Activated B cell treated with CpG ODN at 0.5 μM for 24 hours (primary cell): ENCODE measurements at regions of chr5 and their contacts with region 1.

Region 1: GRCh38 chr5:10563945-10564837 is at the start of gene ANKRD33B:
- DNase-seq: peak; percentile 84
- ATAC-seq: peak; percentile 72
- H3K4me3 Mint-ChIP-seq: peak within 1 kb of the TSS; percentile 97
- H3K27ac Mint-ChIP-seq: peak within 1 kb of the TSS; percentile 93
- H3K4me1 Mint-ChIP-seq: peaks cover 65% of the 10 kb centered on the region
- H3K27me3 Mint-ChIP-seq: no peaks in the 10 kb centered on the region
- CTCF ChIP-seq: no peak
- total RNA-seq, gene ANKRD33B: 156 and 170 TPM in 2 replicates

Region 2: DNA sequence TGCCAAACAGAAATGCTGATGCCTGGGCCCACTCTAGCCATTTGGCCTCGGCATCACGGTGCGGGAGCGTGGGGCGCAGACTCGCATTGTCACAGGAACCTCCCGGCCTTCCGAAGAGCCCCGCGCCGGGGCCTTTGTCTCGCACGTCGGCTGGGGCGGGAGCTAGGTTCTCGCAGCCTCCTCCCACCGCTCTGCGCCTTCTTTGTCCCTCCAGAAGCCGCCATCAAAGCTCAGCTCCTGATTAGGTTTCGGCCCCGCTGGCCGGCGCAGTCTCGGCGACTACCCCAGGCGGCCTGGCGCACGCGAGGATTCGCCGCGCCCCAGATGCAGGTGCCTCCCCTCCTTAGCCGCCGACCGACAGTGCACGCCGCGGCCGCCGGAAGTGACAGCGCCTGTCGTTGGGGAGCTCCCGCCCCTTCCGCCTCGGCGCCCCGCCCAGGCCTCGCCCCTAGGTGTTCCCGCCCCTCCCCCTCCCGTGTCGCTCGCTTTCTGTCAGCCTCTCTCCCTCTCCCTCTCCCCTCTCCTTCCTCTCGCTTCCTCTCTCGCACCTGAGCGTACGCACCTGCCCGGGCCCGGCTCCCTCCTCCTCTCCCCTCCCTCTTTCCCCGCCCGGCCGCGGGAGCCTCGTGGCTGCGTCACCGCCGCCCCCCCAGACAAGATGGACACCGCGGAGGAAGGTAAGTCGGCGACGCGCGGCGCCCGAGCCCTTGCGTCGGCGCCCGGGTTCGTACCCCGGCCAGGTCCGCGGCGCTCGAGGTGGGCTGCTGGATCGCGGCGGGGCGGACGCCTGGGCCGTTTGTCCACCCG is 210.7 kb before region 1 on chr5 and contains the start of gene MARCHF6:
- CTCF ChIA-PET with region 1: no interaction called
- POLR2A ChIA-PET with region 1: interaction called, 3 read pairs
- intact Hi-C with region 1: loop called (anchors 1 kb)
- DNase-seq: peak; percentile 94
- ATAC-seq: peak; percentile 77
- H3K4me3 Mint-ChIP-seq: peak within 1 kb of the TSS; percentile 98
- H3K27ac Mint-ChIP-seq: peak within 1 kb of the TSS; percentile 98
- H3K4me1 Mint-ChIP-seq: peaks cover 49% of the 10 kb centered on the region
- H3K27me3 Mint-ChIP-seq: no peaks in the 10 kb centered on the region
- CTCF ChIP-seq: no peak
- total RNA-seq, gene MARCHF6: 116 and 124 TPM in 2 replicates

Region 3: GRCh38 chr5:10459080-10460055 is 104.8 kb before region 1 on chr5:
- CTCF ChIA-PET with region 1: no interaction called
- POLR2A ChIA-PET with region 1: no interaction called
- intact Hi-C with region 1: no loop called
- DNase-seq: no peak
- ATAC-seq: no peak
- H3K4me3 Mint-ChIP-seq: no peak overlapping the region
- H3K27ac Mint-ChIP-seq: no peak overlapping the region
- H3K4me1 Mint-ChIP-seq: no peaks in the 10 kb centered on the region
- H3K27me3 Mint-ChIP-seq: peaks cover 2% of the 10 kb centered on the region
- CTCF ChIP-seq: no peak

Region 4: DNA sequence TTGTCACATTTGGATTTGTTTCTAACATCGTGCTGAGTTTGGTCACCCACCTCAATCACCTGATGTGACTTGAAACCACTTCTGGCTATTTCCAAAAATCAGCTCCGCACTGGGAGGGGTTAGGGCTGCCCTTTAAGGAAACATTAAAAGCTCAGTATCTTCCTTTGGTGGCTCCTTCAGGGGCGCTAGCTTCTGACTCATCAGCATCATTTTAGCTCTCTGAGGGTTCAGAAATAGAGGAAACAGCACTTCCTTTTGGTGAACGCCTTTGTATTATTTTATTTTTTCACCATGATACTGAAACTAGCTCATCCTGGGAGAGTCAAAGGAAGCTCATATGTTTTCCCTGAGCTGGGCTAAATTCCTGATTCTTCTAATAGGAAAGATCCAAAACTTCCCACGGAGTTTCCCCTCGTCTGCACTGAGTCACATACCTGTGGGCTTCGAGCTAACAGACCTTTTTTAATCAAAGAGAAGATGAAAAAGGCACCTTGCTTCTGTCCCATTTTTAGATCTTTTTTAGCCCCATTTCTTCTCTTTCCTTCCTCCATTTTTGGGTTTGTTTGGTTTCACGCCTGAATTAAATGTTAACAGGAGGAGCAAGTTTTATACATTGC is 74.3 kb before region 1 on chr5:
- CTCF ChIA-PET with region 1: no interaction called
- POLR2A ChIA-PET with region 1: interaction called, 19 read pairs
- intact Hi-C with region 1: loop called (anchors 1 kb)
- DNase-seq: no peak
- ATAC-seq: peak; percentile 98
- H3K4me3 Mint-ChIP-seq: peak overlapping the region; percentile 58
- H3K27ac Mint-ChIP-seq: peak overlapping the region; percentile 56
- H3K4me1 Mint-ChIP-seq: peaks cover 47% of the 10 kb centered on the region
- H3K27me3 Mint-ChIP-seq: no peaks in the 10 kb centered on the region
- CTCF ChIP-seq: no peak

Region 5: GRCh38 chr5:10552183-10553143 is 11.7 kb before region 1 on chr5:
- CTCF ChIA-PET with region 1: no interaction called
- POLR2A ChIA-PET with region 1: interaction called, 6 read pairs
- intact Hi-C with region 1: loop called (anchors 1 kb)
- DNase-seq: no peak
- ATAC-seq: peak; percentile 87
- H3K4me3 Mint-ChIP-seq: peak overlapping the region; percentile 15
- H3K27ac Mint-ChIP-seq: peak overlapping the region; percentile 46
- H3K4me1 Mint-ChIP-seq: peaks cover 48% of the 10 kb centered on the region
- H3K27me3 Mint-ChIP-seq: no peaks in the 10 kb centered on the region
- CTCF ChIP-seq: no peak

Region 6: DNA sequence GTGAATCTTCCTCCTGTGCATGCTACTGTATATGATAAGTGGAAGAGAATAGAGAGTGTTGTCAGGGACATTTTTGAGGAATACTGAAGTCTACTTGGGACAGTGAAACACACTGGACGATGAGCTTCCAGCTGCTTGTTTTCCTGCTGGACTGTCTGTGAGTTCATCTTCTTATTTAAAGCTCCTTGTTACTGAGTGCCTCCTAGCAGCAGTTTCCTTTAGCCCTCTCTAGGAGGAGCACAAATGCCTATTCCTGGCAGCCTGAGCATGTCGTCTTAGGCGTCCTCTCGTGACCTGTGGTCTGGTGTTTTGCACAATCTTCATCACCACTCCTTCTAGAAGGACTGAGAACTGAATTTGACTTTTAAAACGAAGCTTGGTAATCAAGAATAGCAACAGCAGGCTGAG is 43.5 kb after region 1 on chr5:
- CTCF ChIA-PET with region 1: interaction called, 9 read pairs
- POLR2A ChIA-PET with region 1: interaction called, 27 read pairs
- intact Hi-C with region 1: loop called (anchors 1 kb)
- DNase-seq: no peak
- ATAC-seq: peak; percentile 35
- H3K4me3 Mint-ChIP-seq: peak overlapping the region; percentile 80
- H3K27ac Mint-ChIP-seq: peak overlapping the region; percentile 90
- H3K4me1 Mint-ChIP-seq: peaks cover 67% of the 10 kb centered on the region
- H3K27me3 Mint-ChIP-seq: no peaks in the 10 kb centered on the region
- CTCF ChIP-seq: no peak

Region 7: GRCh38 chr5:10635257-10635866 is 71.2 kb after region 1 on chr5:
- CTCF ChIA-PET with region 1: interaction called, 4 read pairs
- POLR2A ChIA-PET with region 1: interaction called, 158 read pairs
- intact Hi-C with region 1: loop called (anchors 1 kb)
- DNase-seq: peak; percentile 57
- ATAC-seq: peak; percentile 64
- H3K4me3 Mint-ChIP-seq: peak overlapping the region; percentile 82
- H3K27ac Mint-ChIP-seq: peak overlapping the region; percentile 99
- H3K4me1 Mint-ChIP-seq: peaks cover 81% of the 10 kb centered on the region
- H3K27me3 Mint-ChIP-seq: no peaks in the 10 kb centered on the region
- CTCF ChIP-seq: no peak

Region 8: GRCh38 chr5:10735569-10736276 is 171.5 kb after region 1 on chr5:
- CTCF ChIA-PET with region 1: no interaction called
- POLR2A ChIA-PET with region 1: interaction called, 8 read pairs
- intact Hi-C with region 1: loop called (anchors 5 kb)
- DNase-seq: peak; percentile 32
- ATAC-seq: peak; percentile 92
- H3K4me3 Mint-ChIP-seq: no peak overlapping the region
- H3K27ac Mint-ChIP-seq: peak overlapping the region; percentile 54
- H3K4me1 Mint-ChIP-seq: peaks cover 46% of the 10 kb centered on the region
- H3K27me3 Mint-ChIP-seq: no peaks in the 10 kb centered on the region
- CTCF ChIP-seq: no peak

Region 9: DNA sequence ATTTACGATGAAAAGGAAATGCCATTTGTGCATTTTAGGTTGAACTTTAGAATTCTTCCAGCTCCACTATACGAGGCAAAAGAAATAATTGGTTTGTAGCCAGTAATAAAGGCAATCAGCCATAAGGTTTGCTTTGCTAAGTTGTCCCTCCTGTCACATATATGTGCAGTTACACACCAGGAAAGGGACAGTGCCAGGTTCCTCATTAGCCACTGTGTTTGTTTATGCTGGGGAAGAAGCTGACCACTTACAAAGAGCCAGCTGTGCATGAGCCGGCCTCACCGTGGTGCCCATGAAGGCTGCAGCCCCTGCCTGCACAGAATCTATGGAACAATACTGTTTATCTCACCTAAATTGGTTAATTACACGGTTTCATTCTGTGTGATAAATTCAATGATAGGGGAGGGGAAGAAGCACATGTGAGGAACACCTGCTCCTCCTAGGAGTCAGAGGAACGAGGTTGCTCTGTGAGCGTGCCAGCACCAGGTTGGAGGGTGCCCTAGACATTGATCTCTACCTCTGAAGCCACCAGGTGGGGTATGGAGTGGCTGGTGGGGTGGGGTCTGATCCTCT is 370.7 kb after region 1 on chr5:
- CTCF ChIA-PET with region 1: no interaction called
- POLR2A ChIA-PET with region 1: no interaction called
- intact Hi-C with region 1: no loop called
- DNase-seq: no peak
- ATAC-seq: no peak
- H3K4me3 Mint-ChIP-seq: no peak overlapping the region
- H3K27ac Mint-ChIP-seq: no peak overlapping the region
- H3K4me1 Mint-ChIP-seq: no peaks in the 10 kb centered on the region
- H3K27me3 Mint-ChIP-seq: peaks cover 7% of the 10 kb centered on the region
- CTCF ChIP-seq: no peak